Left ventricle myocardium superior (tissue), 1 donor: ENCODE measurements at regions of chr2 and their contacts with region 1.

Region 1: DNA sequence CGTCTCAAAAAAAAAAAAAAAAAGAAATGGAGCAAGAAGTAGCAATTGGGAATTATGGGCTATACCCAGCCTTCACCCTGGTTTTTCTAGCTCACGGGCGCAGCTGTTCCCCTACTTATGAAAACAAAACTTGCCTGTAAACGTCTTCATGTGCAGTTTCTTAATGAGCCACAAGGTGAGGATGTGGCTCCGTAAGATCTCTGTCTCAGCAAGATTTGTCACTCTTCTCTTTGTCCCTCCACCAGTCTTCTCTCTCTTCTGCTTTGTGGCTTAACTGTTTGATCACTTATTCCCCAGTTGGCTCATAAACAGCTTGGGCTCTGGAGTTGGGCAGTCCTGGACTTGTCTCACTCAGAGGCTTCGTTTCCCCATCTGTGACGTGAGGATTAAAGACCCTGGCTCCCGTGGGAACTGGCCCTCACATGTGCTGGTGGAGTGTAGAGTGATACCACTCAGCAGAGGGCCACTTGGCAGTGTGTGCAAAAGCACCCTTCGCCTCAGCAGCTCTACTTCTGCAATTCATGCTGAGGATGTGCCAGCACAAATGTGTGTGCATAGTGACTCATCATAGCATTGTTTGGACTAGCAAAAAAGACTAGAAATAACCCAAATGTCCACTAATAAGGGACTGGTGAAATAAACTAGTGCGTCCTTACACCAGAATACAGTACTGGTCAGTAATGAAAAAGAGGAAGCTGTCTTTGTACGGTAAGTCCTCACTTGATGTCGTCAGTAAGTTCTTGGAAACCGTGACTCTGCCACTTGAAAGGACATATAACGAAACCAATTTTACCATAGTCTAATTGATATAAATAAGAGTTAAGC is 8.7 kb downstream of the CEP68 start:
- DNase-seq: peak; percentile 75
- ATAC-seq: peak; percentile 80

Region 2: DNA sequence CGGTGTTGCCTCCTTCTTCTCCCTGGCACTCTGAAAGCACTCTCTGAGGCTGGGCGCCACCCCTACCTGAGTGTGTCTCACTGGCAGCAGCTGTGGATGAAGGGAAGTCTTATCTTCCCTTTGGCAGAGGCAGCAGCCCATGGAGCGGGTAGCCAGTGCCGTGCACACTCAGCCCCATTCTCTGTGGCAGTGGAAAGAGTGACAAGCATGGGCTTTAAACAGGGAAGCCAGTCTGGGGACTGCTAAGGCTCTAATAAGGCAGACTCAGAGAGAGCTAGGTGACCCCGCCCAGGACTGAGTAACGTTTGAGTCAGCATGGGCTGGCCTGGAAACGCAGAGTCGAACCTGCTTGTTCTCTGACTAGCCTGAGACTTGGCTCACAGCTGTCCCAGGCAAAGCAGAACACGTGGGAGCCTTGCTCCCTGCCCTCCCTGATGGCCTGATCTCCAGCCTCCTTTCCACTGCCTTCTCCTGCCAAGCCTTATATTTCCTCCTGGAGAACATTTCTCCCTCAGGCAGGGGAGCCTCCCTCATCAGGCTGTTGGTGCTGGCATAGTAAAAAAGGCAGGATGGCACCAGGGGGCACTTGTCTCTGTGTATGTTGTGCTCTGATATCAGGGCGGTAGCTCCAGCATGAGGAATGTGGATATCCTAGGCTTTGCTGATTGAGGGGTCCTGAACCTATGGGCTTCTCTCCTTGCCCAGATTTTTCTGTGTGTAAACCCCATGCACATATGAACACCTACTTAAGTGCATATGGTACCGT is 704.9 kb before region 1 on chr2:
- intact Hi-C with region 1: no loop called
- DNase-seq: peak; percentile 60
- ATAC-seq: peak; percentile 94

Region 3: DNA sequence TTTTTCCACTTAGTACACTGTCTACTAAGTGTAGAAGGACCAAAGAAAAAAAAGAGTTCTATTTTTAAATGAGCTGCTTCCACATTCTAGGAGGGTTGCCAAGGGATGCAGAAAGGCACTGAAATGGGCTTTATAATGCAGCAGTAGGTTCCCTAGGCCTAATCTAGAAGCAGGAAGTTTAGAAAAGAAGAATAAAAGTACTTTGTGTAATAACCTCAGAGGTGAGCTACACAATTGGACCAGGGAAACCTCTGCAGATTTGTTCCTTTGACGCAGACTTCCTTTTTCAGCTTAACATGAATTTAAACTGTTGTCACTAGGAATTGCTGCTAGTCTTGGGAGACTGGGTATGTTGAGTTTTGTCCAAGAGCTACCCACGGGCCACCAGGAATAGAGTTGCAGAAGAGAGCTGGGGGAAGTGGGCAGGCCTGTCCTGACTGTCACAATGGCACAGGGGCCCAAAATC is 99.5 kb after region 1 on chr2:
- intact Hi-C with region 1: loop called (anchors 10 kb)
- DNase-seq: no peak
- ATAC-seq: peak; percentile 89

Region 4: GRCh38 chr2:65554765-65555591 is 490.0 kb after region 1 on chr2:
- intact Hi-C with region 1: no loop called
- DNase-seq: no peak
- ATAC-seq: no peak

Region 5: DNA sequence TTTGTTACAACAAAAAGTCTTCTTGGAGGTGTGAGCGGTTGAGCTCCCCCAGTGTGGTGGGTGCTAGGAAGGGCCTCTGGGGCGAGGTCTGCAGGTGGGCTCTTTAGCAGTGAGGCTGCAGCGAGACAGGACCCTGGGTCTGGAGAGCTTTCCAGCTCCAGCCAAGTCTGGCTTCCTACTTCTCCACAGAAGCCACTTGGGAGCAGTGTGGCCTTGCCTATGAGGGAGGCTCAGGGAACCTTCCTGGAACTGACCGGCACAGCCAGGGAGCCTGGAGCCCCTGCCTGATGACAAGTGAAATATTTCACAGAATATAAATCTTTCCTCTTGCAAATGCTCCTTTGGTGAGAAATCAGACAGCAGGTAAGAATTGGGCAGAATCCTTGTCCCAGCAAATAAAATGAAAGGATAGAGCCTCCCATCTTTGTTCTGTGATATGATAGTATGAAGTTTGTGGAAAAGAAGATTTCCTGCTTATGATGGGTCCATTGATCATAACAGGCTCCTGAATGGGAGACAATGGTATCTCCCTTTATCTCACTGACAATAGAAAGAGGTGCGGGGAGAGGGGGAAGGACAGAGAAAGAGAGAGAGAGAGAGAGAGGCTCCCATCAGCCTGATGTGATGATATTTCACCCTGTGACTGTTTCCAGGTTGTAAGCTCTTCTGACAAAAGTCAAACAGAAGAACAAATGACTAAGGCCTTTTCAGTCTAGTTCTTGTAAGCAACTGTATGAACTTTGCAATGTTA is 657.3 kb after region 1 on chr2:
- intact Hi-C with region 1: no loop called
- DNase-seq: peak; percentile 58
- ATAC-seq: peak; percentile 91